AG04449 (cell line): ENCODE measurements at regions of chr6 and their contacts with region 1.

Region 1: GRCh38 chr6:112384511-112384910 is 37.4 kb downstream of the RFPL4B start:
- DNase-seq: no peak
- H3K4me3 ChIP-seq: no peak overlapping the region
- CTCF ChIP-seq: no peak

Region 2: GRCh38 chr6:112372226-112372806 is 12.2 kb before region 1 on chr6:
- CTCF ChIA-PET with region 1: interaction called, 21 read pairs
- POLR2A ChIA-PET with region 1: no interaction called
- DNase-seq: no peak
- H3K4me3 ChIP-seq: no peak overlapping the region
- CTCF ChIP-seq: peak; percentile 41